Mammary epithelial cell (primary cell): ENCODE measurements at regions of chr1 and their contacts with region 1.

Region 1: GRCh38 chr1:22704440-22705067 is 6.1 kb upstream of the EPHB2 start:
- DNase-seq: peak; percentile 68
- H3K4me3 ChIP-seq: no peak overlapping the region
- H3K27ac ChIP-seq: no peak overlapping the region
- H3K4me1 ChIP-seq: no peaks in the 10 kb centered on the region
- H3K27me3 ChIP-seq: no peaks in the 10 kb centered on the region
- CTCF ChIP-seq: peak; percentile 81 to 95

Region 2: GRCh38 chr1:22673486-22674409 is 30.8 kb before region 1 on chr1:
- CTCF ChIA-PET with region 1: no interaction called
- dilution Hi-C with region 1: no loop called
- in situ Hi-C with region 1: no loop called
- intact Hi-C with region 1: loop called (anchors 1 kb)
- DNase-seq: peak; percentile 39
- H3K4me3 ChIP-seq: no peak overlapping the region
- H3K27ac ChIP-seq: no peak overlapping the region
- H3K4me1 ChIP-seq: no peaks in the 10 kb centered on the region
- H3K27me3 ChIP-seq: no peaks in the 10 kb centered on the region
- CTCF ChIP-seq: peak; percentile 66 to 77

Region 3: DNA sequence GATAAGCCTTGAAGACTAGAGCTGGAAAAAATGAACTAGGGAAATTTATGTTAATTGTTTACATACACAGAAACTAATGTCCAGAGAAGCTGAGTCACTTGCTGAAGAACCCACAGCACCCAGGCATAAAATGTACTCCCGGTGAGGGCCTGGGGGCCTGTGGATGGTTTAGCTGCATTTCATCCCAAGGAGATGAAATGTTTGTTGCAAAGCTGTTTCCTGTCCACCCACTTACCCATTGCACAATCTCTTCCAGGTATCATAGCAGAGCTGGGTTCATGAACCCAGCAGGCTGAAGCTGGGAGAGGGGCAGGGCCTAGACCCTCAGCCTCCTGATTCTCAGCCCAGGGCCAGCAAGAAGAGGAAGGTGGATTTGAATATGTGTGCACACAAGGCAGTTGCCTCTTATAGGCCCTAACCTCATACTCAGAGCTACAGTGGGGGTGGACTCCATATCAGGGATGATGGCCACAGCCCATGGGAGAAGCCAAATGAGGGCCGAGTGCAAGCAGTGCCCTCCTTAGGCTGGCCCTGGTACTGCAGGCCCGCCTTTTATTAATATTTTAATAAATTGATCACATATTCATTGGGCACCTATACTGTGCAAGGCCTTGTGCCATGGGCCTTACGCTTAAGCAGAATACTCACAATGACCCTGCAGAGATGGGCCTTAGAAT is 157.3 kb after region 1 on chr1:
- CTCF ChIA-PET with region 1: interaction called, 16 read pairs
- dilution Hi-C with region 1: no loop called
- in situ Hi-C with region 1: no loop called
- intact Hi-C with region 1: loop called (anchors 1 kb)
- DNase-seq: peak; percentile 86
- H3K4me3 ChIP-seq: no peak overlapping the region
- H3K27ac ChIP-seq: peak overlapping the region; percentile 45
- H3K4me1 ChIP-seq: peaks cover 14% of the 10 kb centered on the region
- H3K27me3 ChIP-seq: no peaks in the 10 kb centered on the region
- CTCF ChIP-seq: peak; percentile 89 to 91

Region 4: GRCh38 chr1:22889213-22889827 is 184.8 kb after region 1 on chr1:
- CTCF ChIA-PET with region 1: interaction called, 7 read pairs
- dilution Hi-C with region 1: loop called (anchors 5 kb)
- in situ Hi-C with region 1: loop called in 1 of 2 experiments (anchors 10 kb)
- intact Hi-C with region 1: loop called (anchors 1 kb)
- DNase-seq: no peak
- H3K4me3 ChIP-seq: no peak overlapping the region
- H3K27ac ChIP-seq: no peak overlapping the region
- H3K4me1 ChIP-seq: no peaks in the 10 kb centered on the region
- H3K27me3 ChIP-seq: no peaks in the 10 kb centered on the region
- CTCF ChIP-seq: peak; percentile 83 to 91

Region 5: DNA sequence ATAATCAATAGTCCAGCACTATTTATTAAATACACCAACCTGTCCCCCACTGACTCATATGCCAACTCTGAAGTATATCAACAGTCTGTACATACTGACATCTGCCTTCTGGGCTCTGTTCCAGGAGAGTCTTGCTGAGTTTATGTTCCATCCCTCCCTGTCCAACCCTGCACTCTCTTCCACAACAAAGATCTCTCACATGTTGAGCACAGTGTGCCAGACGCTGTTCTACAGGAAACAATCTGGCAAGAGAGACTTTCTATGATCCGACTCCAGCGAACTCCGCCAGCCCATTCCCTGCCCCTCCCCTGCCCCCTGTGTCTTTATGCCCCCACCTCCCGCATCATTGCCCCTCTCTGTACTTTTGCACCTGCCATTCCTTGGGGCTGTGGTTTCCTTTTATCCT is 264.8 kb after region 1 on chr1:
- CTCF ChIA-PET with region 1: interaction called, 5 read pairs
- dilution Hi-C with region 1: no loop called
- in situ Hi-C with region 1: no loop called
- intact Hi-C with region 1: loop called (anchors 1 kb)
- DNase-seq: peak; percentile 59
- H3K4me3 ChIP-seq: no peak overlapping the region
- H3K27ac ChIP-seq: no peak overlapping the region
- H3K4me1 ChIP-seq: no peaks in the 10 kb centered on the region
- H3K27me3 ChIP-seq: peaks cover 6% of the 10 kb centered on the region
- CTCF ChIP-seq: no peak